CD4-positive, alpha-beta T cell (primary cell): ENCODE measurements at regions of chr2 and their contacts with region 1.

Region 1: GRCh38 chr2:43194121-43194869 is 32.1 kb downstream of the ZFP36L2 start:
- DNase-seq: peak in 1 of 14 experiments; percentile 35
- ATAC-seq: no peak
- H3K4me3 ChIP-seq: peak overlapping the region; percentile 57
- H3K4me3 Mint-ChIP-seq: peak overlapping the region; percentile 82
- H3K27ac ChIP-seq: peak overlapping the region; percentile 88 to 97
- H3K27ac Mint-ChIP-seq: peak overlapping the region; percentile 94
- H3K4me1 ChIP-seq: peaks cover 88% of the 10 kb centered on the region
- H3K4me1 Mint-ChIP-seq: peaks cover 55% of the 10 kb centered on the region
- H3K27me3 ChIP-seq: no peaks in the 10 kb centered on the region
- H3K27me3 Mint-ChIP-seq: no peaks in the 10 kb centered on the region
- CTCF ChIP-seq: no peak

Region 2: DNA sequence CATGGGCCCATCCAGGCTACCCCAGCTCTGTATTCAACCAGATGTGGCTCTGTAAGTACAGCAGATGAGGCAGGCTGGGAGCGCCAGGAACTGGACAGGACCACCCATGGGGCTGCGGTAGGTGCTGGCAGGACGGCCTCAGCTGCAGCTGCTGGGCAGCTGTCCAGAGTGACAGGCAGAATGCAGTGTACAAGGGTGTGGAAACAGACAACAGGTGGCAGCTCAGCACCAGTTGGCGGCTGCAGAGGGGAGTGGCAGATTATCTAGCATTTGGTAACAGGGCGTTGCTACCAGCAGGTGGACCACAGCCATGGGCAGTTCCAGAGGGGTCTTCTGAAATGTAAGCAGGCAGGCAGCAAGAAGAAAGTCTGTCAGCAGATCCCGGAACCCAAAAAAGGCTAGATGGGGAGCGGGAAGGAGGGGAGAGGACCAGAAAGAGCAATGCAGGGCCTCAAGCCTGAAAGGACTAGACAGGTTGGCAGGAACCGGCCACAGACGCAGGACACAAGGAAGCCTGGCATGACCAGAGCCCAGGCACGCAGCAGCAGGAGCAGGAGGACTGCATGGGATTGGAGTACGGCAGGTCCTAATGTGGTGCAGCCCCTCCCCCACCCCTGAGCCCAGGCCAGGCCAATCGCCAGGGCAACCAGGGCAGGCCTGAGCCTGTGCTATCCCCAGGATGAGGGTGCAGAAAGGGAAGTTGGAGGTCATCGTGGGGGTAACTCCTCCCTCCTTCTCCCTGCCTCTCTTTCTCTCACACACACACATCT is 1121.8 kb before region 1 on chr2:
- CTCF ChIA-PET with region 1: no interaction called
- POLR2A ChIA-PET with region 1: no interaction called
- intact Hi-C with region 1: no loop called
- DNase-seq: no peak
- ATAC-seq: no peak
- H3K4me3 ChIP-seq: no peak overlapping the region
- H3K4me3 Mint-ChIP-seq: no peak overlapping the region
- H3K27ac ChIP-seq: no peak overlapping the region
- H3K27ac Mint-ChIP-seq: no peak overlapping the region
- H3K4me1 ChIP-seq: no peaks in the 10 kb centered on the region
- H3K4me1 Mint-ChIP-seq: no peaks in the 10 kb centered on the region
- H3K27me3 ChIP-seq: peaks cover 8 to 11% of the 10 kb centered on the region in 2 experiments
- H3K27me3 Mint-ChIP-seq: peaks cover 40% of the 10 kb centered on the region
- CTCF ChIP-seq: no peak

Region 3: GRCh38 chr2:43139996-43140621 is 54.2 kb before region 1 on chr2:
- CTCF ChIA-PET with region 1: interaction called, 6 read pairs
- POLR2A ChIA-PET with region 1: interaction called, 94 read pairs
- intact Hi-C with region 1: loop called in 1 of 2 experiments (anchors 2 kb)
- DNase-seq: peak in 5 of 14 experiments; percentile 11 to 76 (median 59)
- ATAC-seq: no peak
- H3K4me3 ChIP-seq: no peak overlapping the region
- H3K4me3 Mint-ChIP-seq: peak overlapping the region; percentile 31
- H3K27ac ChIP-seq: peak overlapping the region; percentile 23 to 54
- H3K27ac Mint-ChIP-seq: peak overlapping the region; percentile 99
- H3K4me1 ChIP-seq: peaks cover 85% of the 10 kb centered on the region
- H3K4me1 Mint-ChIP-seq: peaks cover 76% of the 10 kb centered on the region
- H3K27me3 ChIP-seq: no peaks in the 10 kb centered on the region
- H3K27me3 Mint-ChIP-seq: no peaks in the 10 kb centered on the region
- CTCF ChIP-seq: no peak

Region 4: DNA sequence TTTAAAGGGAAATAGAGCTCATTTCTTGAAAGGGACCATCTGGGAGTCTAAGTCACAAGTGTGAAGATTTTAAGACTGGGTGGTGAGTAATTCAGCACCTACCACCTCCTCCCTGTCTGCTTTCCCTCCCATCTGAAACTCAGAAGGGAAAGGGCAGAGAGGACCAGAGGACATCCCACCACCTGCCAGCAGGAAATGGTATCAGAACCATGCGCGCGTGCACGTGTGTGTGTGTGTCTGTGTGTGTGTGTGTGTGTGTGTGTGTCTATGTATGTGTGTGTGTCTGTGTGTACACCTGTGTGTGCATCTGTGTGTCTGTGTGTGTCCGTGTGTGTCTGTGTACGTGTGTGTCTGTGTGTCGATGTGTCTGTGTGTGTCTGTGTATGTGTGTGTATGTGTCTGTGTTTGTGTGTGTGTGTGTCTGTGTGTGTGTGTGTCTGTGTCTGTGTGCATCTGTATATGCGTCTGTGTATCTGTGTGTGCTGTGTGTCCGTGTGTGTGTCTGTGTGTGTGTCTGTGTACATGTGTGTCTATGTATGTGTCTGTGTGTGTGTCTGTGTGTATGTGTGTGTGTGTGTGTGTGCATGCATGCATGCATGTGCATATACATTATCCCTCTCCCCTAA is 44.7 kb before region 1 on chr2:
- CTCF ChIA-PET with region 1: no interaction called
- POLR2A ChIA-PET with region 1: interaction called, 10 read pairs
- intact Hi-C with region 1: no loop called
- DNase-seq: peak in 4 of 14 experiments; percentile 53 to 70 (median 57)
- ATAC-seq: peak; percentile 72
- H3K4me3 ChIP-seq: no peak overlapping the region
- H3K4me3 Mint-ChIP-seq: peak overlapping the region; percentile 8
- H3K27ac ChIP-seq: no peak overlapping the region
- H3K27ac Mint-ChIP-seq: peak overlapping the region; percentile 73
- H3K4me1 ChIP-seq: peaks cover 61% of the 10 kb centered on the region
- H3K4me1 Mint-ChIP-seq: peaks cover 72% of the 10 kb centered on the region
- H3K27me3 ChIP-seq: no peaks in the 10 kb centered on the region
- H3K27me3 Mint-ChIP-seq: no peaks in the 10 kb centered on the region
- CTCF ChIP-seq: no peak

Region 5: DNA sequence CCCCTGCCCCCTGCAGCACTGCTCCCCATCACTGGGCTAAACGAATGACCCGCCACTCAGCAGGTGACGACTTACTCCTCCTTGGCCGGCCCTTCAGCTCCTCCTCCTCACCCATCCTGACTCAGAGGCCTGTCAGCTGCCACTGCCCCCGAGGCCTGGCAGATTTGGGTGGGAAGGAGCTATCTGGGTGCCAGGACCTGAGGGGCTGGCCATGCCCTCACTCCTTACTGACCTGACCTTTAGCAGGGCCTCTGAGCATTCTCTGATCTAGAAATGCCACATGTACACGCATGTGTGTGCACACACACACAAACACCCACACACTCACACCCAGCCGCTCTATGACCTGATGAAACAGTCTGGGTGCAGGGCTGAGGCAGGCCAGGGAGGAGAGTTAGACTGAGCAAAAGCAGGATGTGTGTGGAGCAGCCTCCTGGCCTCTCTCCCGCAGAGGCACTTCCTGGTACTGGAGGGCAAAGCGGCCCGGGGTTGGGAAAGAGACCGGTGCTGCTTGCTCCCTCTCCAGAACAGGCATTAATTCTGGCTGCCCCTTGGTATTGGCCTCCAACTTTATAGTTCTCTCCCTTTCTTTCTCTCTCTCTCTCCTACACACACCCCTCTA is 35.9 kb before region 1 on chr2:
- CTCF ChIA-PET with region 1: no interaction called
- POLR2A ChIA-PET with region 1: interaction called, 15 read pairs
- intact Hi-C with region 1: loop called in 1 of 2 experiments (anchors 1 kb)
- DNase-seq: peak in 11 of 14 experiments; percentile 43 to 85 (median 66)
- ATAC-seq: peak; percentile 67
- H3K4me3 ChIP-seq: peak overlapping the region; percentile 30
- H3K4me3 Mint-ChIP-seq: peak overlapping the region; percentile 77
- H3K27ac ChIP-seq: peak overlapping the region; percentile 91 to 94
- H3K27ac Mint-ChIP-seq: peak overlapping the region; percentile 98
- H3K4me1 ChIP-seq: peaks cover 89% of the 10 kb centered on the region
- H3K4me1 Mint-ChIP-seq: peaks cover 89% of the 10 kb centered on the region
- H3K27me3 ChIP-seq: no peaks in the 10 kb centered on the region
- H3K27me3 Mint-ChIP-seq: no peaks in the 10 kb centered on the region
- CTCF ChIP-seq: no peak

Region 6: DNA sequence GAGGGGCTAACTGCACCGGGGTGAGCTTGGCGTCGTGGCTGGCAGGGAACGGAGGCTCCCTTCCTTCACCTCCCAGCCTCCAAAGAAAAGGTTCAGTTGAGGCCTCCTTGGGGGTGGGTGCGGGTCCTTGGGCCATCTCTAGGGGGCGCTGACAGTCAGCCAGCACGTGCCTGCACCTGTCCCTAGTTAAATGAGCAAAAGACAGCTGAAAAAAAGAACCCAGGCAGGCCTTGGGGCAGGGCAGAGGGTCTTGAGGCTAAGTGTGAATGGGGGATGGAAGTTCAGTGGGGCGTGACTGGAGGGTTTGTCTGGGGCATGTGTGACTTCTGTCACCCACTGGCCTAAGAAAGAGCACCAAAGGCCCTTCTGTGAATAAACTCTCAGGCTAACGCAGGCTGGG is 24.3 kb before region 1 on chr2:
- CTCF ChIA-PET with region 1: interaction called, 24 read pairs
- POLR2A ChIA-PET with region 1: interaction called, 217 read pairs
- intact Hi-C with region 1: loop called (anchors 1 kb)
- DNase-seq: peak; percentile 49 to 83 (median 70)
- ATAC-seq: peak; percentile 16
- H3K4me3 ChIP-seq: peak overlapping the region; percentile 26
- H3K4me3 Mint-ChIP-seq: peak overlapping the region; percentile 13
- H3K27ac ChIP-seq: peak overlapping the region; percentile 72 to 76
- H3K27ac Mint-ChIP-seq: peak overlapping the region; percentile 97
- H3K4me1 ChIP-seq: peaks cover 85% of the 10 kb centered on the region
- H3K4me1 Mint-ChIP-seq: peaks cover 82% of the 10 kb centered on the region
- H3K27me3 ChIP-seq: no peaks in the 10 kb centered on the region
- H3K27me3 Mint-ChIP-seq: no peaks in the 10 kb centered on the region
- CTCF ChIP-seq: peak; percentile 75

Region 7: GRCh38 chr2:43178602-43179542 is 15.4 kb before region 1 on chr2:
- CTCF ChIA-PET with region 1: interaction called, 3 read pairs
- POLR2A ChIA-PET with region 1: interaction called, 217 read pairs
- intact Hi-C with region 1: loop called (anchors 1 kb)
- DNase-seq: peak in 9 of 14 experiments; percentile 32 to 72 (median 56)
- ATAC-seq: no peak
- H3K4me3 ChIP-seq: no peak overlapping the region
- H3K4me3 Mint-ChIP-seq: peak overlapping the region; percentile 70
- H3K27ac ChIP-seq: peak overlapping the region; percentile 54 to 77
- H3K27ac Mint-ChIP-seq: peak overlapping the region; percentile 97
- H3K4me1 ChIP-seq: peaks cover 80% of the 10 kb centered on the region
- H3K4me1 Mint-ChIP-seq: peaks cover 73% of the 10 kb centered on the region
- H3K27me3 ChIP-seq: no peaks in the 10 kb centered on the region
- H3K27me3 Mint-ChIP-seq: no peaks in the 10 kb centered on the region
- CTCF ChIP-seq: no peak

Region 8: GRCh38 chr2:43219383-43220228 is 25.3 kb after region 1 on chr2:
- CTCF ChIA-PET with region 1: interaction called, 10 read pairs
- POLR2A ChIA-PET with region 1: interaction called, 506 read pairs
- intact Hi-C with region 1: loop called (anchors 1 kb)
- DNase-seq: peak; percentile 65 to 93 (median 76)
- ATAC-seq: peak; percentile 38
- H3K4me3 ChIP-seq: peak overlapping the region; percentile 97
- H3K4me3 Mint-ChIP-seq: peak overlapping the region; percentile 87
- H3K27ac ChIP-seq: peak overlapping the region; percentile 62 to 92
- H3K27ac Mint-ChIP-seq: peak overlapping the region; percentile 98
- H3K4me1 ChIP-seq: peaks cover 69% of the 10 kb centered on the region
- H3K4me1 Mint-ChIP-seq: peaks cover 62% of the 10 kb centered on the region
- H3K27me3 ChIP-seq: no peaks in the 10 kb centered on the region
- H3K27me3 Mint-ChIP-seq: peaks cover 19% of the 10 kb centered on the region
- CTCF ChIP-seq: no peak

Region 9: DNA sequence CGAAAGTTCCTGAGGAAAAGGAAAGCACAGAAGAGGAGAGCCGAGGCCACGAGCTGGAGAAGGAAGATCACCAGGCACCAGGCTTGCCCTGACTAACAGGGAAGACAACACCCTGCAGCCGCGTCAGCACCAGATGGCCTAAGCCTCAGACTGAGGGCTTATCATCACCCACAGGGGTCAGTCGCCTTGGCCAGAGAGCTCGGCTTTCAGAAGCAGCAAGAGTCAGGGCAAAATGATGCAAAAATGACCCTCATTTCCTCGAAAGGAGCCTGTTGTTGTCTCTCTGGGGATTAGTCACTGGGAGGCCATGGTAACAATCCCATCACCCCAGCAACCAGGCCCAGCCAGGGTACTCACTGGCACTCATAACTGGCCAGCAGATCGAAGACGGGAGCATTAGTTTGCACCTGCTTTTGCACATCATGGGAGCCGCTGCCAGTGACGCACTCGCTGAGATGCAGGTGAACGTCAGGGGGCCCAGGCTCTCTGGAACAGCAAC is 74.8 kb after region 1 on chr2:
- CTCF ChIA-PET with region 1: no interaction called
- POLR2A ChIA-PET with region 1: no interaction called
- intact Hi-C with region 1: no loop called
- DNase-seq: peak in 1 of 14 experiments; percentile 31
- ATAC-seq: no peak
- H3K4me3 ChIP-seq: no peak overlapping the region
- H3K4me3 Mint-ChIP-seq: no peak overlapping the region
- H3K27ac ChIP-seq: no peak overlapping the region
- H3K27ac Mint-ChIP-seq: no peak overlapping the region
- H3K4me1 ChIP-seq: no peaks in the 10 kb centered on the region
- H3K4me1 Mint-ChIP-seq: no peaks in the 10 kb centered on the region
- H3K27me3 ChIP-seq: no peaks in the 10 kb centered on the region
- H3K27me3 Mint-ChIP-seq: no peaks in the 10 kb centered on the region
- CTCF ChIP-seq: no peak

Region 10: GRCh38 chr2:43412121-43412753 is 217.9 kb after region 1 on chr2:
- CTCF ChIA-PET with region 1: no interaction called
- POLR2A ChIA-PET with region 1: no interaction called
- intact Hi-C with region 1: no loop called
- DNase-seq: no peak
- ATAC-seq: no peak
- H3K4me3 ChIP-seq: no peak overlapping the region
- H3K4me3 Mint-ChIP-seq: no peak overlapping the region
- H3K27ac ChIP-seq: no peak overlapping the region
- H3K27ac Mint-ChIP-seq: no peak overlapping the region
- H3K4me1 ChIP-seq: no peaks in the 10 kb centered on the region
- H3K4me1 Mint-ChIP-seq: peaks cover 11% of the 10 kb centered on the region
- H3K27me3 ChIP-seq: no peaks in the 10 kb centered on the region
- H3K27me3 Mint-ChIP-seq: no peaks in the 10 kb centered on the region
- CTCF ChIP-seq: no peak